B cell (primary cell): ENCODE measurements at regions of chr11 and their contacts with region 1.

Region 1: GRCh38 chr11:130299978-130300377 is 14.7 kb downstream of the ZBTB44 start:
- DNase-seq: no peak
- ATAC-seq: no peak
- H3K4me3 ChIP-seq: no peak overlapping the region
- H3K4me3 Mint-ChIP-seq: peak overlapping the region; percentile 4
- H3K27ac ChIP-seq: no peak overlapping the region
- H3K27ac Mint-ChIP-seq: no peak overlapping the region
- H3K4me1 ChIP-seq: peaks cover 10 to 20% of the 10 kb centered on the region in 2 donors
- H3K4me1 Mint-ChIP-seq: peaks cover 46% of the 10 kb centered on the region
- H3K27me3 ChIP-seq: no peaks in the 10 kb centered on the region
- H3K27me3 Mint-ChIP-seq: no peaks in the 10 kb centered on the region
- CTCF ChIP-seq: no peak

Region 2: GRCh38 chr11:130227373-130227772 is 72.6 kb before region 1 on chr11:
- CTCF ChIA-PET with region 1: no interaction called
- POLR2A ChIA-PET with region 1: no interaction called
- intact Hi-C with region 1: loop called (anchors 5 kb)
- DNase-seq: no peak
- ATAC-seq: peak; percentile 45
- H3K4me3 ChIP-seq: no peak overlapping the region
- H3K4me3 Mint-ChIP-seq: no peak overlapping the region
- H3K27ac ChIP-seq: no peak overlapping the region
- H3K27ac Mint-ChIP-seq: no peak overlapping the region
- H3K4me1 ChIP-seq: peaks cover 0 to 5% of the 10 kb centered on the region in 2 donors
- H3K4me1 Mint-ChIP-seq: peaks cover 9% of the 10 kb centered on the region
- H3K27me3 ChIP-seq: no peaks in the 10 kb centered on the region
- H3K27me3 Mint-ChIP-seq: no peaks in the 10 kb centered on the region
- CTCF ChIP-seq: no peak

Region 3: GRCh38 chr11:130314750-130315285 is 14.8 kb after region 1 on chr11 and contains the start of gene ZBTB44:
- CTCF ChIA-PET with region 1: no interaction called
- POLR2A ChIA-PET with region 1: no interaction called
- intact Hi-C with region 1: no loop called
- DNase-seq: peak; percentile 94
- ATAC-seq: peak; percentile 76
- H3K4me3 ChIP-seq: peak within 1 kb of the TSS; percentile 59 to 77 (median 72)
- H3K4me3 Mint-ChIP-seq: peak within 1 kb of the TSS; percentile 97
- H3K27ac ChIP-seq: peak within 1 kb of the TSS; percentile 81 to 91
- H3K27ac Mint-ChIP-seq: peak within 1 kb of the TSS; percentile 98
- H3K4me1 ChIP-seq: peaks cover 14 to 24% of the 10 kb centered on the region in 2 donors
- H3K4me1 Mint-ChIP-seq: peaks cover 43% of the 10 kb centered on the region
- H3K27me3 ChIP-seq: no peaks in the 10 kb centered on the region
- H3K27me3 Mint-ChIP-seq: no peaks in the 10 kb centered on the region
- CTCF ChIP-seq: no peak
- total RNA-seq, gene ZBTB44: 89.4 and 102 TPM in 2 replicates